ENCODE measurements at regions of chr5 and their contacts with region 1.

Region 1: DNA sequence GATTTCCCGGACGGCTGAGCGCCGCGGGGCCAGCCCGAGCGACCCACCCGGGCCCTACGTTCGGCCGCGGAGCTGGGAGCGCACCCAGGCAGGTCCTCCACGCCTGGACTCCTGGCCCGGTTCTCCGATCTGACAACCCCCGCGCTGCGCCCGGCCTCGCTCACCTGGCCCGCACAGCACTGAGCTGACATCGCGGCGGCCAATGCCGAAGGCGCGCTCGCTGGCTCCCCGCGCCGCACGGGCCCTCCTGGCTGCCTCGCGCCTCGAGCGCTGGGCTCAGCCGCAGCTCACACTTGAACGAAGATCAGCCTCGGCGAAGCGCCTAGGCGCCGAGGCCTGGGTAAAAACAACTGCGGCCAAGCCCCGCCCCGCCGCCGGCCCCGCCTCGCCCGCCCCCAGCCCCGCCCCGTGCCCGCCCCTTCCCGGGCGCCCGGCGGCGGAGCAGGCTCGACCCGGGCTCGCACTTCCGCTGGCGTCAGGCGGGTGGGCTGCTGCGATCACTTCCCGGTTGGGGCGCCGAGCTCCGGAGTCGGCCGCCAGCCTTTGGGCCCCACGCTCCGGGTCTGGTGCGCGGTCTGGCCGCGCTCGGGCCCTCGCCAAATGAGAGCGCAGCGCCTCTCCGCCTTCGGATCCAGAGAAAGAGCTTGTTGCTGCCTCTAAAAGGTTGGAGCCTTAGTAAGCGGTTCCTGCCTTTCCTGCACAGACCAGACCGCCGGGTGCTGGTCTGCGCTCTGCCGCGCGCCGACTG is at the start of gene SERINC5:
- DNase-seq: peak; percentile 85
- H3K4me3 Mint-ChIP-seq: peak within 1 kb of the TSS; percentile 97
- H3K27ac Mint-ChIP-seq: peak within 1 kb of the TSS; percentile 95
- H3K4me1 Mint-ChIP-seq: peaks cover 58% of the 10 kb centered on the region
- H3K27me3 Mint-ChIP-seq: no peaks in the 10 kb centered on the region
- total RNA-seq, gene SERINC5: 85.7 to 88.8 TPM

Region 2: GRCh38 chr5:80268916-80269315 is 13.0 kb after region 1 on chr5:
- CTCF ChIA-PET with region 1: interaction called, 21 read pairs
- POLR2A ChIA-PET with region 1: interaction called, 4 read pairs
- DNase-seq: no peak
- H3K4me3 Mint-ChIP-seq: peak overlapping the region; percentile 45
- H3K27ac Mint-ChIP-seq: peak overlapping the region; percentile 97
- H3K4me1 Mint-ChIP-seq: peaks cover 56% of the 10 kb centered on the region
- H3K27me3 Mint-ChIP-seq: no peaks in the 10 kb centered on the region

Region 3: DNA sequence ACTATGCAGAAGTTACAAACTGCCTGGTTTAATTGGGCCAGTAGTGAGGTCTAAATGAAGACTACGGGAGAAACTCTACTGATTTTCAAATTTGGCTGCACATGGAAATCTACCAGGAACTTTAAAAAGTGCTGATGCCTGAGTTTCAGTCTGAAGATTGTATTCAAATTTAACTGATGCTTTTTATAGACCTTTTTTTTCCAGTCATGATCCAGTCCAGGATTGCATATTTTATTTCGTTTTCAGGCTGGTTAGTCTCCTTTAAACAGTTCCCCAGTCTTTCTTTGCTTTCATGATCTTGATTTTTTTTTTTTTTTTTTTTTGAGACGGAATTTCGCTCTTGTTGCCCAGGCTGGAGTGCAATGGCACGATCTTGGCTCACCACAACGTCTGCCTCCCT is 40.2 kb after region 1 on chr5:
- CTCF ChIA-PET with region 1: no interaction called
- POLR2A ChIA-PET with region 1: no interaction called
- DNase-seq: no peak
- H3K4me3 Mint-ChIP-seq: no peak overlapping the region
- H3K27ac Mint-ChIP-seq: no peak overlapping the region
- H3K4me1 Mint-ChIP-seq: no peaks in the 10 kb centered on the region
- H3K27me3 Mint-ChIP-seq: peaks cover 6% of the 10 kb centered on the region

Measured in activated CD4-positive, alpha-beta T cell treated with anti-CD3 and anti-CD28 coated beads, Interleukin-2, amount 10 ng/mL, durations not matched to agents 7 days and 5 days (primary cell).